ENCODE measurements at regions of chr17 and their contacts with region 1.

Region 1: GRCh38 chr17:74864866-74865395 is 5.2 kb upstream of the GRIN2C start:
- DNase-seq: peak; percentile 68 to 81
- H3K4me3 ChIP-seq: no peak overlapping the region
- H3K27ac ChIP-seq: no peak overlapping the region
- H3K4me1 ChIP-seq: peaks cover 0 to 10% of the 10 kb centered on the region in 2 donors
- H3K27me3 ChIP-seq: peaks cover 12 to 13% of the 10 kb centered on the region in 2 donors
- CTCF ChIP-seq: peak; percentile 93 to 95 (median 94)
- POLR2A ChIP-seq: no peak

Region 2: GRCh38 chr17:74748529-74749365 is 116.2 kb before region 1 on chr17 and contains the start of gene NHERF1:
- intact Hi-C with region 1: loop called (anchors 10 kb)
- DNase-seq: peak; percentile 85 to 88
- H3K4me3 ChIP-seq: peak within 1 kb of the TSS; percentile 62 to 92
- H3K27ac ChIP-seq: peak within 1 kb of the TSS; percentile 30 to 78
- H3K4me1 ChIP-seq: no peaks in the 10 kb centered on the region
- H3K27me3 ChIP-seq: no peaks in the 10 kb centered on the region
- CTCF ChIP-seq: peak in 1 of 4 experiments; percentile 6
- POLR2A ChIP-seq: peak; percentile 95
- total RNA-seq, gene NHERF1: 3.3 to 16.9 (median 12.0) TPM

Region 3: DNA sequence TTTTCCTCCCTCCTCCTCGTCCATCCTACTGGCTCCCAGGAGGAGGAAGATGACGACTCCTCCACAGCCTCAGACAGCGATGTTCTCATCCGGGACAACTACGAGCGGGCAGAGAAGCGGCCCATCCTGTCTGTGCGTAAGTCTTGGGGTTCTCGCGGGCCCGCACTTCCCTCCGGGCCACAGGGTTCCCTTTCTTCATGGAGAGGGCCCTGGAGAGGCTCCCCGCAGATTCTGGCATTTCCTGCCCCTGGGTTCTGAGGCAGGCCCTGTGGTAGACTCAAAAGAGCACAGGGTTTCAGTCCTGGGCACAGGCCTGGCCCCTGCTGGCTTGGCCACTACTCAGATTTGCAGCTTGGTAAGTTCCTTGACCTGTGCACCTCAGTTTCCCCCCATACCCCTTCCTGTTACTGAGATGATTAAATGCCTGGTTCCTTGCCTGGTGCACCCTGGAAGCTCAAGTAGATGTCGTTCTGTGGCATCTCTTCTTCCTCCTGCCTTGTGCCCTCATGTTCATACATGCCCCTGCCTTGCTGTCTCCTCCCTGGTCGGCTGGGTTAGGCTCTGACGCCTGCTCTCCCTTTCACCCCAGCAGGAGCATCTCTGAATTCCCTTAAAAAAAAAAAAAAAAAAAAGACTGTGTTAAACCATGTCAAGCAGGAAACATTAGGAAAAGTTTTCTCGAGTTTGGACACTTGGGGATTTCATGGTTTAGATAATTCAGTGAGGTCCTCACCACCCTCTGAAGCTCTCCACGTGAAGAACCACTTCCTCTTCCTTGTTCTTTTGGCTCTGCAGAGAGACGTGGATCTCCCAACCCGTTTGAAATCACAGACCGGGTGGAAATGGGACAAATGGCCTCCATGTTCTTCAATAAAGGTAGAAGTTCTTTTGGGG is 74.5 kb before region 1 on chr17:
- intact Hi-C with region 1: loop called (anchors 5 kb)
- DNase-seq: no peak
- H3K4me3 ChIP-seq: no peak overlapping the region
- H3K27ac ChIP-seq: no peak overlapping the region
- H3K4me1 ChIP-seq: no peaks in the 10 kb centered on the region
- H3K27me3 ChIP-seq: no peaks in the 10 kb centered on the region
- CTCF ChIP-seq: no peak
- POLR2A ChIP-seq: no peak

Region 4: DNA sequence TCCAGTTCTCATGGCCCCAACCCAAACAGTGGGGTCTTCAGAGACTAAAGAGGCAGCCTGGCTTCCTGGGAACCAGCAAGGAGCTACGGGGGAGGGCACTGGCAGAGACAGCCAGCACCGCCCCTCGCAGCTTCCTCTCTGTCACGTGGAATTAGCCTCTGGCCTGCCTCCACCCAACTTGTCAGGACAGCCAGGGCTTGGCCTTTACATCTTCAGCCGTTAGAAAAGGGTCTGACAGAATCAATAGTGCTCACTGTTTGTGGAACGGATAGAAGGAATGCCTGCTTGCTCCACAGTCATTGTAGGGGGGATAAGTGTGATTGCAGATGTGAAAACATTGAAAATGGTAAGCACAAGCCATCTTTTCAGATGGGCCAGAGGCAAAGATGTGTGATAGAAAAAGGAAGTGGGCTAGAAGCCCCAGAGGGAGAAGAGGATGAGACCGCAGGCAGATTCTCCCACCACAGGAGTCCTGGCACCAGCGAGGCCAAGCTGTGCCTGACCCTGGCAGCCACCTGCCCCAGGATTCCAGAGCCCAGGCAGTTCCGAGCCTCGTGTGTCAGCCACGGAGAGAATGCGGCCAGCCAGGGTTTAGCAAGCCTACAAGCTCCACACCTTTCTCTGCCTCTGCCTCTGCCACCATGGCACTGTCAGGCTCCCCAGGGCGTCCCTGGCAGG is 23.8 kb before region 1 on chr17:
- intact Hi-C with region 1: no loop called
- DNase-seq: peak; percentile 54 to 63
- H3K4me3 ChIP-seq: no peak overlapping the region
- H3K27ac ChIP-seq: peak overlapping the region; percentile 15 to 47
- H3K4me1 ChIP-seq: peaks cover 0 to 21% of the 10 kb centered on the region in 2 donors
- H3K27me3 ChIP-seq: no peaks in the 10 kb centered on the region
- CTCF ChIP-seq: no peak
- POLR2A ChIP-seq: no peak

Region 5: GRCh38 chr17:76240461-76241203 is 1375.7 kb after region 1 on chr17 and contains the start of gene RNF157:
- intact Hi-C with region 1: no loop called
- DNase-seq: peak; percentile 27 to 40
- H3K4me3 ChIP-seq: peak within 1 kb of the TSS; percentile 41 to 45
- H3K27ac ChIP-seq: no peak within 1 kb of the TSS
- H3K4me1 ChIP-seq: no peaks in the 10 kb centered on the region
- H3K27me3 ChIP-seq: peaks cover 0 to 4% of the 10 kb centered on the region in 2 donors
- CTCF ChIP-seq: no peak
- POLR2A ChIP-seq: peak in 1 of 2 donors; percentile 31
- total RNA-seq, gene RNF157: 0.77 to 5.7 (median 1.7) TPM

Measured in uterus (tissue), 4 donors.